GM10248 (cell line): ENCODE measurements at regions of chr5 and their contacts with region 1.

Region 1: GRCh38 chr5:141716009-141716408 is 34.0 kb upstream of the ARAP3 start:
- DNase-seq: no peak
- CTCF ChIP-seq: no peak

Region 2: DNA sequence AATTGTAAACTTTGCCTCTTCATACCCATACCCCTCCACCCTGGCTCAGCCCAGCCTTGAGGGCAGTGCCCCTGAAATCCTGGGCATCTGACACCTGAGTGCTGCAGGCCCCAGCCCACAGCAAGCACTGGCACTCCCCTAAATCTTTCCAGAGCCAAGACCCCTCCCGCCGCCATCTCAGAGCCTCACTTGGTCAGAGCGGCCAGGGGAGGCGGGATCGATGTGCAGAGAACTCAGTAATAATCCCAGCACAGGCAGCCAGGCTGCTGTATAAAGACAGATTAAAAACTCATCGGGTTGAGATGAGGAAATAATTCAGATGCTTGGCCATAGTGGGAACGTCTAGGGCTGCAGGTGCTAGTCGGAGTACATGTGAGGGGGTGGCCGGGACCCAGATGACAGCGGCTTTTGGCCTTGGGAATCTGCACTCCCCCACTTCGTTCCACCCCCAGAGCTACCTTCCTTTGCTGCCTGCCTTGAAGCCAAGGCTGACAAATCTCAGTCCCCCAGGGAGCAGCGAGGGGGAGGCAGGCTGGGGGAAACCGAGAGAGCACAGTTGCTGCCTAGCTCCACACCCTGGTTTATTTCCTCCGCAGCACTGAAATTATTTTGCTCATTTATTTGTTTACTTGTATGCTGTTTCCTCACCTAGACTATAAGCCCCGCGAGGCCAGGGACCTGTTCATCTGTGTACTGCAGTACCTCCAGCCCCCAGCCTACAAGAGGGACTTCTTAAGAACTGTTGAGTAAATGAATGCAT is 14.5 kb before region 1 on chr5:
- CTCF ChIA-PET with region 1: interaction called, 14 read pairs
- POLR2A ChIA-PET with region 1: no interaction called
- DNase-seq: peak; percentile 54
- CTCF ChIP-seq: no peak

Region 3: GRCh38 chr5:141849375-141850243 is 133.6 kb after region 1 on chr5:
- CTCF ChIA-PET with region 1: no interaction called
- POLR2A ChIA-PET with region 1: no interaction called
- DNase-seq: peak; percentile 86
- CTCF ChIP-seq: no peak